Activated B cell treated with CpG ODN at 0.5 μM for 24 hours (primary cell): ENCODE measurements at regions of chr21 and their contacts with region 1.

Region 1: GRCh38 chr21:33641336-33642026 is at the start of gene CRYZL1:
- DNase-seq: peak; percentile 99
- ATAC-seq: peak; percentile 78
- H3K4me3 Mint-ChIP-seq: peak within 1 kb of the TSS; percentile 98
- H3K27ac Mint-ChIP-seq: peak within 1 kb of the TSS; percentile 99
- H3K4me1 Mint-ChIP-seq: peaks cover 19% of the 10 kb centered on the region
- H3K27me3 Mint-ChIP-seq: peaks cover 14% of the 10 kb centered on the region
- CTCF ChIP-seq: no peak
- total RNA-seq, gene CRYZL1: 37.1 and 46.3 TPM in 2 replicates

Region 2: GRCh38 chr21:31731802-31732596 is 1909.5 kb before region 1 on chr21 and contains the start of gene SCAF4:
- CTCF ChIA-PET with region 1: no interaction called
- POLR2A ChIA-PET with region 1: no interaction called
- intact Hi-C with region 1: loop called (anchors 5 kb)
- DNase-seq: peak; percentile 82
- ATAC-seq: peak; percentile 84
- H3K4me3 Mint-ChIP-seq: no peak within 1 kb of the TSS
- H3K27ac Mint-ChIP-seq: peak within 1 kb of the TSS; percentile 84
- H3K4me1 Mint-ChIP-seq: peaks cover 21% of the 10 kb centered on the region
- H3K27me3 Mint-ChIP-seq: no peaks in the 10 kb centered on the region
- CTCF ChIP-seq: no peak
- total RNA-seq, gene SCAF4: 71.6 and 80.5 TPM in 2 replicates

Region 3: DNA sequence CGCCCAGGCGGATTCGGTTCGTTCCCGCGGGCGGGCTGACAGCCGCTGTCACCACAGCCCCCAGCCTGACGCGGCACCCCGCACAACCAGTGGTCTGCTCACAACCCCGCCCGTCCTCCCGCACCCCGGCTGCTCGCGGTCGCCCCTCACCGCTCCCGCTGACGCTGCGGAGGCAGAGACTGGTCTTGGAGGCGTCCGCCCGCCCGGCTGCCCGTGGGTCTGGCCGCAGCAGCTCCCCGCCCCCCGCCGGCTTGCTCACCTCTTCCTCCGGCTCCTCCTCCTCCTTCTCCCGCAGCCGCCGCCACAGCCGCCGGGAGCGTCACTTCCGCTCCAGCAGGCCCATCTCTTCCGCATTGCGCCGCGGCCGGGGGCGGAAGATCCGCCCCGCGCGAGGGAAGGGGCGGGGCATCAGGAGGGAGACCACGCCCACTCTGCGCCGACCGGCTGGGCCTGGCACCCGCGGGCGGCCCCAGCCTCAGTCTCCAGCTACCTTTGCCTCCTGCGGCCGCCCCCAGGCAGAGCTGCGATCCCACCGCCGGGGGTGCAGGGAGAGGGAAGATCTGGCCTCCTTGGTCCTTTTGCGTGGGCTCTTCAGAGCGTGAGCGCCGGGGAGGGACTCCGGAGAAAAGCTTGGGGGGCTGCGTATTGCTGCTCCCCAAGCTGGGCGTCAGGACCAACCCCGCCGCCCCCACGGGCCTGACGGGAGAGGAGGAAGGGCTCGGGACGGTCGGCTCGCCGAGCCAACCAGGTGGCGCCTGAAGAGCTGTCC is 913.6 kb before region 1 on chr21 and contains the start of gene SYNJ1:
- CTCF ChIA-PET with region 1: no interaction called
- POLR2A ChIA-PET with region 1: no interaction called
- intact Hi-C with region 1: loop called (anchors 1 kb)
- DNase-seq: peak; percentile 94
- ATAC-seq: peak; percentile 91
- H3K4me3 Mint-ChIP-seq: peak within 1 kb of the TSS; percentile 93
- H3K27ac Mint-ChIP-seq: peak within 1 kb of the TSS; percentile 72
- H3K4me1 Mint-ChIP-seq: peaks cover 14% of the 10 kb centered on the region
- H3K27me3 Mint-ChIP-seq: no peaks in the 10 kb centered on the region
- CTCF ChIP-seq: no peak
- total RNA-seq, gene SYNJ1: 5.2 and 5.4 TPM in 2 replicates

Region 4: DNA sequence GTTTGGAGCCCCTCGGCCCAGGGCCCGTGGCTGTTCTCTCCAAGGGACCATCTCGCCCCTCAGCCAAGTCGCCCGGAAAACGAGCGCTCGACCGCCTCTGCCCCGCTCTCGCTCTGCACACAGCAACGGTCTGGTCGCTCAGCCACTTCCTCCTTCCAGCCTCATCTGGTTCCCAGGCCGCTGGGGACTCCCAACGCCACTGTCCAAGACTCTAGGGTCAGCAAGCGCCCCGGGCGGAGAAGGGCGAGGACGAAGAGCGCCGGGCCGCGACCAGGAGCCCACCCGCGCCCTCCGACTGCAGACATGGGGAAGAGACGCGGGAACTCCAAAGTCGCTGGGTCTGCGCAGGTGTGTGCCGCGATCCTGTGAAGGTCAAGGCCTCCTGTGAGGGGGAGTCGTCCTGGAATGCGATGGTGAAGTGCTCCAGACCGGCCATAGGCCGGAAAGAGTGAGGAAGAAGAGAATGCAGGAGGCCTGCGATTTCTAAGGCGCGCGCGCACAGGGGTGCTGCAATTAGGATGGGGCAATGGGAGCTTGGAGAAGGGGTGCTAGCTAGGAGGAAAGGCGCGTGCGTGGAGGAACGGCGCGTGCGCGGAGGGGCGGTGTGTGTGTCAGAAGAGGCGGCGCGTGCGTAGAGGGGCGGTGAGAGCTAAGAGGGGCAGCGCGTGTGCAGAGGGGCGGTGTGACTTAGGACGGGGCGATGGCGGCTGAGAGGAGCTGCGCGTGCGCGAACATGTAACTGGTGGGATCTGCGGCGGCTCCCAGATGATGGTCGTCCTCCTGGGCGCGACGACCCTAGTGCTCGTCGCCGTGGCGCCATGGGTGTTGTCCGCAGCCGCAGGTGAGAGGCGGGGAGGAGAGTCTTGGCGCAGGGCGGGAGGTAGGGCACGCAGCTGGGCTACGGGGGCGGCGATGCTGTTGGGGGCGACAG is 316.9 kb before region 1 on chr21 and contains the start of gene IFNAR1:
- CTCF ChIA-PET with region 1: no interaction called
- POLR2A ChIA-PET with region 1: no interaction called
- intact Hi-C with region 1: loop called (anchors 5 kb)
- DNase-seq: peak; percentile 97
- ATAC-seq: peak; percentile 80
- H3K4me3 Mint-ChIP-seq: no peak within 1 kb of the TSS
- H3K27ac Mint-ChIP-seq: no peak within 1 kb of the TSS
- H3K4me1 Mint-ChIP-seq: peaks cover 32% of the 10 kb centered on the region
- H3K27me3 Mint-ChIP-seq: no peaks in the 10 kb centered on the region
- CTCF ChIP-seq: no peak
- total RNA-seq, gene IFNAR1: 33.9 and 34.5 TPM in 2 replicates

Region 5: DNA sequence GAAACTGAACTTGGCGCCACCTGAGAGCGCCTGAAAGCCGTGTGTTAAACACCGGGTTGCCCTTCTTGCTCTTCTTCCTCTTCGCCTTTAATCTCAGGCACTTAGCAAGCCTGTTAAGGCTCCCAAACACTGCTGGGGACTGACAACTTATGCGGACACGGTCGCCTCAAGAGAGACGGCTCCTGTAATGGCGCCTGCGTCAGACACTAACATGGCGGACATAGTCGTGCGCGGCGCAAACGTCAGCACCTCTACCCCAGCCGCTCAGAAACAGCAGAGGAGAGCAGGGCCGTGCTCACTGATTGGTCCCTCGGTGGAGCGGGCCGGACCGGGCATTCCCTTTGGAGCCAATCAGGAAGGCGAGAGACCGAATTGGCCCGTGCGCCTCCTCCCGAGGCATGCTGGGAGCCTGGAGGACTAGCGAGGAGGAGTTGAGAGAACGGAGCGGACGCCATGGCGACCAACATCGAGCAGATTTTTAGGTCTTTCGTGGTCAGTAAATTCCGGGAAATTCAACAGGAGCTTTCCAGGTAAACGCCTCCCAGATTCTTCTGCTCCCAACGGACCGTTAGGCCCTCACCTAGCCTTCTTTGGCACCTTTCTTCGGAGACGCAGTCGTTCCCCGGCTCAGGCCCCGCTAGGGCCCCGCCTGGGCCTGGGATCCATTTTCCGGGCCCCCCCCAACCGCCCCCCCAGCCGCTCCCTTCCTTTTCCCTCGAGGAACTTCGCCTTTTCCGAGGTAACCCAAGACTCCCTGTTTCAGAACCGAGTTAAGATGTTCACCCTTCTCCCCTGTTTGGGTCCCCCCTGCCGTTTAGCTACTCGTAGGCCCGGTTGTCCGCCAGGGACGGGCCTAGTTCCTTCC is 98.6 kb before region 1 on chr21 and contains the start of gene SON:
- CTCF ChIA-PET with region 1: no interaction called
- POLR2A ChIA-PET with region 1: interaction called, 5 read pairs
- intact Hi-C with region 1: loop called (anchors 1 kb)
- DNase-seq: peak; percentile 86
- ATAC-seq: peak; percentile 88
- H3K4me3 Mint-ChIP-seq: peak within 1 kb of the TSS; percentile 98
- H3K27ac Mint-ChIP-seq: peak within 1 kb of the TSS; percentile 100
- H3K4me1 Mint-ChIP-seq: peaks cover 48% of the 10 kb centered on the region
- H3K27me3 Mint-ChIP-seq: no peaks in the 10 kb centered on the region
- CTCF ChIP-seq: no peak
- total RNA-seq, gene SON: 429 and 474 TPM in 2 replicates

Region 6: GRCh38 chr21:33780631-33781030 is 139.2 kb after region 1 on chr21:
- CTCF ChIA-PET with region 1: no interaction called
- POLR2A ChIA-PET with region 1: no interaction called
- intact Hi-C with region 1: no loop called
- DNase-seq: no peak
- ATAC-seq: no peak
- H3K4me3 Mint-ChIP-seq: no peak overlapping the region
- H3K27ac Mint-ChIP-seq: no peak overlapping the region
- H3K4me1 Mint-ChIP-seq: no peaks in the 10 kb centered on the region
- H3K27me3 Mint-ChIP-seq: no peaks in the 10 kb centered on the region
- CTCF ChIP-seq: no peak

Region 7: DNA sequence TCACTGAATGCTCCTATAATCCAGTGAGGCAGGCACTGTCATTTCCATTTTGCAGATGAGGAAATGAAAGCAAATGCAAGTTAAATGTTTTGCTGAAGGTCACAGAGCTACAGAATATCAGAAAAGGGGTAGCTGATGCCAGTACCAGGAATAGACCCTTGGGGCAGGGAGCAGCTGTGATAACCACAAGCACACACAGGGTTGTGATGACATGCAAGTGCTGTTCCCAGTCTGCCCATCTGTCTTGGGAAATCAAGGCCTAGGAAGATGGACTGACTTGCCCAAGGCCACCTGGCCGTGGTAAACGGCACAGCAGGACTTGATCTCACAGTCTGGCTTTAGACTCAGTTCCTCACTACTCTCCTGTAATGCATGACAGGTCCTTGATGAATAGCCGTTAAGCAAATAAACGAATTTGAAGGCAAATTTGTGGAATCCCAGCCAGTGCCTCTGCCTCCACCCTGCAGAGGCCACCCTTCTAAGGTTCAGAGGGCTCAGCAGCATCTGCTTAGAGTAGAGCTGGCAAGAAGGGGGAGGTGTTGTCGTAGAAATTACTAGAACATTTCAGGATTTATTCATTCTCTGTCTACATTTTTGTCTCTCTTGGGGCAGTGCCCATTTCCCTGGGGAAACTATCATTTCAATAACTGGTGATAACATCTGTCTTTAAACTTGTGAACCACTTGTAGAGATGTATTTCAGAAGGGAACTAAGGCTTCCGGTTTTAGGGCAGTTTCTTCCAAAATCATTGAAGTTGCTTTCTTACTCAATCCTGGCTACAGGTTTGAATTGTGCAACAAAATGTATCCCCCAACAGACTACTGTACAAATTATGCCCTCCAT is 378.7 kb after region 1 on chr21:
- CTCF ChIA-PET with region 1: no interaction called
- POLR2A ChIA-PET with region 1: no interaction called
- intact Hi-C with region 1: loop called (anchors 1 kb)
- DNase-seq: peak; percentile 45
- ATAC-seq: peak; percentile 69
- H3K4me3 Mint-ChIP-seq: peak overlapping the region; percentile 75
- H3K27ac Mint-ChIP-seq: peak overlapping the region; percentile 96
- H3K4me1 Mint-ChIP-seq: no peaks in the 10 kb centered on the region
- H3K27me3 Mint-ChIP-seq: no peaks in the 10 kb centered on the region
- CTCF ChIP-seq: no peak